Activated B cell treated with CpG ODN at 0.5 μM for 24 hours (primary cell): ENCODE measurements at regions of chr2 and their contacts with region 1.

Region 1: GRCh38 chr2:31333527-31334183 is 80.9 kb downstream of the XDH start:
- DNase-seq: peak; percentile 70
- ATAC-seq: peak; percentile 94
- H3K4me3 Mint-ChIP-seq: no peak overlapping the region
- H3K27ac Mint-ChIP-seq: peak overlapping the region; percentile 50
- H3K4me1 Mint-ChIP-seq: peaks cover 10% of the 10 kb centered on the region
- H3K27me3 Mint-ChIP-seq: peaks cover 3% of the 10 kb centered on the region
- CTCF ChIP-seq: peak; percentile 87

Region 2: DNA sequence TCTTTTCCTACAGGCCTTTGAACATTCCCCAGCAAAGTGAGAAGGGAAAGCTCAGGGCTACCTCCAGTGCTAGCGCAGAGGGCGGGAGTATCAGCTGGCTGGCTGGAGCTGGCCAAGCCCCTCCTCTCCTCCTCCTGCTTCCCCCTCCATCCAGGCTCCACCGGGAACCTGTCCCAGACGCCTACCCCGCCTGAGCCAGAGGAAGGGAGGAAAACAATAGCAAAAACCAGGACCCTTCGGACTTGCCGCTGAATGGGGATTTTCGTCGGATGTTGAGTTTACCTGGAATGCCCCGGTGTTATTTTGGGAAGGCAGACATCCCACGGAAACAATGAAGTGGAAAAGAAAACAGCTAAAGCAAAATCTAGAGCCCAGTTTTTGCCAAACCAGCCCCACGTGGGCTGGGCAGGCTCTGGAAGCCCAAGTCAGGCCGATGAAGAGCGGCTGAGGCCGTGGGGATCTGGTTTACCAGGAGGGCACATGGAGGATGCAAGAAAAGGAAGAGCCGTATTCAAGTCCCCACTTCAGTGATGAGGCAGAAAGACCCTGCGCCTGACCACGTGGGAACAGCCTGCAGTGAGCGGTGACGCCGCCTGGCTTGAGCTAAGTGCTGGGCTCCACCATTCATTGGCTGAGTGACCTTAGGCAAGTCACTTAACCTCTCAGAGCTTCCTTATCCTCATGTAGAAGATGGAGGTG is 987.0 kb before region 1 on chr2:
- CTCF ChIA-PET with region 1: no interaction called
- POLR2A ChIA-PET with region 1: no interaction called
- intact Hi-C with region 1: no loop called
- DNase-seq: no peak
- ATAC-seq: no peak
- H3K4me3 Mint-ChIP-seq: no peak overlapping the region
- H3K27ac Mint-ChIP-seq: no peak overlapping the region
- H3K4me1 Mint-ChIP-seq: peaks cover 10% of the 10 kb centered on the region
- H3K27me3 Mint-ChIP-seq: no peaks in the 10 kb centered on the region
- CTCF ChIP-seq: no peak

Region 3: GRCh38 chr2:30862054-30862651 is 471.5 kb before region 1 on chr2:
- CTCF ChIA-PET with region 1: interaction called, 90 read pairs
- POLR2A ChIA-PET with region 1: no interaction called
- intact Hi-C with region 1: loop called (anchors 1 kb)
- DNase-seq: no peak
- ATAC-seq: peak; percentile 76
- H3K4me3 Mint-ChIP-seq: no peak overlapping the region
- H3K27ac Mint-ChIP-seq: no peak overlapping the region
- H3K4me1 Mint-ChIP-seq: peaks cover 18% of the 10 kb centered on the region
- H3K27me3 Mint-ChIP-seq: peaks cover 2% of the 10 kb centered on the region
- CTCF ChIP-seq: no peak

Region 4: GRCh38 chr2:31127931-31128330 is 205.7 kb before region 1 on chr2:
- CTCF ChIA-PET with region 1: no interaction called
- POLR2A ChIA-PET with region 1: no interaction called
- intact Hi-C with region 1: no loop called
- DNase-seq: no peak
- ATAC-seq: no peak
- H3K4me3 Mint-ChIP-seq: no peak overlapping the region
- H3K27ac Mint-ChIP-seq: no peak overlapping the region
- H3K4me1 Mint-ChIP-seq: no peaks in the 10 kb centered on the region
- H3K27me3 Mint-ChIP-seq: no peaks in the 10 kb centered on the region
- CTCF ChIP-seq: no peak

Region 5: DNA sequence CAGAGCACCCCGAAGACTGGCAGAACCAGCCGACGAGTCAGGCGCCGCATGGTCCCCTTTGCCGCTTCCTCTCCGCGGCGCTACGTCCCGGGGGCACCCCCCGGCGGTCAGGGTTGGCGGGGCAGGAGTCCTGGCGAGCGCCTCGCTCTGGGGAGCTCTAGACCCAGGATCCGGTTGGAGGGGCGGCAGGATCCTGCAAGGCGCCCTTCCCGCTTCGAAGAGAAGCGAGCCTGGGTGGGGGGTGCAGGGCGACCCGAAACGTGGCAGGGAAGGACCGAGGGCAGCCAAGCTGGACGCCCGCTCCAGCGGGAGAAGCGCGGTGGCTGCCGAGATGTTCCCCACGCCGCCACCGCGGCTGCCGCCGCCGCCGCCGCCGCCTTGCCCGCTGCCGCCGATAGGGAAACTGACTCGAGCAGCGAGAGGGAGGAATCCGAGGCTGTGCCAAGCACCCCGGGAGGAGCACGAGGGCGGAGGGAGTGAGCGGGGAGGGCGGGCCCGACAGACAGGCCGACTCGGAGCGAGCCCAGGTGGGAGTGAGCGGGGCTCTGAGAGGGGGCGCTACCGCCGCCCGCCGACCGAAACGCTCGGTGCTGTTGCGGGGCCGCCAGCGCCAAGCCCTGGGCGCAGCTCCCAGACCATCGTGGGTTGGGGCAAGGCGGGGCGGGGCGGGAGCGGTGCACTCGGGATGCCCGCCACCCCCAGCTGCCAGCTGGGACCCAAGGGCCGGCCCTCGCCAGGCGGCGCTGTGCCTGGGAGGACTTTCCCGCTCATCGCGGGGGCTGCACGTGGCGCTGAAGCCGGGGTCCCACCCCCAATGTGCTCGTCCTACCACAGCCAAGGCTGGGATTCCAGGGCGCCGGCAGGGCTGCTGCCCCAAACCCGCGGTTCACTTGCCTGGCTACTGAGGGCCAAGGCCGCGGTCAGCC is 195.4 kb before region 1 on chr2 and contains the start of gene GALNT14:
- CTCF ChIA-PET with region 1: interaction called, 16 read pairs
- POLR2A ChIA-PET with region 1: no interaction called
- intact Hi-C with region 1: loop called (anchors 1 kb)
- DNase-seq: peak; percentile 64
- ATAC-seq: peak; percentile 76
- H3K4me3 Mint-ChIP-seq: peak within 1 kb of the TSS; percentile 85
- H3K27ac Mint-ChIP-seq: no peak within 1 kb of the TSS
- H3K4me1 Mint-ChIP-seq: peaks cover 8% of the 10 kb centered on the region
- H3K27me3 Mint-ChIP-seq: peaks cover 5% of the 10 kb centered on the region
- CTCF ChIP-seq: no peak
- total RNA-seq, gene GALNT14: 6.6 and 7.9 TPM in 2 replicates

Region 6: DNA sequence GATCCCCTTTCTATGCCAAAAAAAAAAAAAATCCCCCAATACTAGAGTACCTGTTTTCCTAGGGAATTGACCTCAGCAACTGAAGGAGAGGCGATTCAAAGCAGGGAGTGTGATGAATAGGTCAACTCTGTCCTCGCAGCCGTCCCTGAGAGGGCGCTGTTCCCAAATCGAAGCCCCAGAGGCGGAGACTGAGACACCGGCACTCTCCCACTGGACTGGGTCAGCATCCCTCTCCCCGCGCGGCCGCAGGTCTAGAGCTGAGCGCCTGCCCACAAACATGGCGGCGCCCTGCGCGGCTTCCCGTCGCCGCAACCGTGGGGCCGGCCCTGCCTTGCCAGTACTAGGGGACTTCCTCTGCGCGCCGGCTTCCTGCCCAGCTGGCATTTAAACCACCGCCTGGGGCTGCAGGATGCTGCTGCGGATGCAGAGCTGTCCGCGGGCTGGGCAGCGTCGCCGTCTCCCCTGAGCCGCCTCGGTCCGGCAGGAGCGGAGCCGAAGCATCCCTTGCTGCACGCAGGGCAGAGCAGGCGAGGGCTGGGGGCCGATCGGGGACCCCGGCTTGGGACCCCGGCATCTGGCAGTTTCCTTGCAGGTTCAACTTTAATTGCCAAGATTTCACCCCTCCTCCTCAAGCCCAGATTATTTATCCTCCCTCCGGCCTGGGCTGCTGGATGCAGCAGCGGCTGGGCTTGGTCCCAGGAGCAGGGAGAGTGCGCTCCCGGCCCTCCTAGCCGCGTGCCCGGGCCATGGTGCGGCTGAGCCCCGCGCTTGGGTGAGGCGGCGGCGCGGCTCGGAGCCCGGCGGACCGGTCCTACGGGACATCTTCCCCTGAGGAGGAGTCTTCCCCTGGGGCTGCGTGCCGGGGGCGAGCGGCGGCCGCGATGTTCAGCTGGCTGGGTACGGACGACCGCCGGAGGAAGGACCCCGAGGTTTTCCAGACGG is 99.6 kb before region 1 on chr2 and contains the start of gene EHD3:
- CTCF ChIA-PET with region 1: interaction called, 6 read pairs
- POLR2A ChIA-PET with region 1: interaction called, 3 read pairs
- intact Hi-C with region 1: loop called (anchors 1 kb)
- DNase-seq: peak; percentile 85
- ATAC-seq: peak; percentile 98
- H3K4me3 Mint-ChIP-seq: peak within 1 kb of the TSS; percentile 85
- H3K27ac Mint-ChIP-seq: peak within 1 kb of the TSS; percentile 82
- H3K4me1 Mint-ChIP-seq: peaks cover 44% of the 10 kb centered on the region
- H3K27me3 Mint-ChIP-seq: no peaks in the 10 kb centered on the region
- CTCF ChIP-seq: no peak
- total RNA-seq, gene EHD3: 38.1 and 40.3 TPM in 2 replicates

Region 7: GRCh38 chr2:31318361-31319336 is 15.0 kb before region 1 on chr2:
- CTCF ChIA-PET with region 1: interaction called, 5 read pairs
- POLR2A ChIA-PET with region 1: interaction called, 12 read pairs
- intact Hi-C with region 1: no loop called
- DNase-seq: peak; percentile 60
- ATAC-seq: peak; percentile 97
- H3K4me3 Mint-ChIP-seq: peak overlapping the region; percentile 66
- H3K27ac Mint-ChIP-seq: peak overlapping the region; percentile 83
- H3K4me1 Mint-ChIP-seq: peaks cover 51% of the 10 kb centered on the region
- H3K27me3 Mint-ChIP-seq: no peaks in the 10 kb centered on the region
- CTCF ChIP-seq: no peak